ENCODE measurements at regions of chr5 and their contacts with region 1.

Region 1: DNA sequence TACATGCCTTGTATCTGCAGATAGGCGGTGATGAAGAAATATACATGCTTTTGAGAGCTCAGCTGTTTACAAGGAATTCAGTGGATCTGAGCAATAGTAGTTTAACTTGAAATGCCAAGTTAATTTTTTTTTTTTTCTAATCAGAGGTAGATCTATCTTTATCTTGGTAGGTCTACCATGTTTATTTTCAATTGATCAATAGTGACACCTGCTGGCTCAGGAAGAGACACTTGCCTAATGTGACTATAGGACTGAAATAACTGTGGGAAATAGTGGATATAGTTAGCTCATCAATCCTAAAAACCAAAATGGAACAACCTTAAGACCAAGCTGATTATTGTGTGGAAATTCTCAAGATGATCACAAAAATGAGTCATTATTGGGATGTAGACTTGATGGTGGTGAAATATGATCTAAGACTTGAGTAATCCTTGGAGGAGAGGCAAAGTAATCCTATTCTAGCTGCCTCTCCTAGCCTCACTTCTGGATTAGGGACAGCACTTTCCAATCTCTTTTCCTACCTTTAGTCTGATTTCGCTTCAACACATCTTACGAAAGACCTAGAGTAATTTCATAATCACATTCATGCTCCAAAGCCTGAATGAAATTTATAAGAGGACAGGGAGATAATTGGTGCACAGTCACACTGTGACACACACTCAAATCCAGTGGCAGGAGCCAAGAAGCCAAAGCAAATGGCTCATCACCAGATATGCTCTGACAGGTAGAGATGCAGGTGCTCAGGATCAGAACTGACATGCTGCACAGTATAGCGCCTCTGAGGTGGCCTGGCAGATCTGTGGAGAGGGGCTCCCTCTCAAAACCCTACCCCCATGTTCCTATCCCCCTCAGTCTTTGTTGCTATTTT is 156.3 kb downstream of the HMHB1 start:
- DNase-seq: peak; percentile 77
- ATAC-seq: peak; percentile 47
- H3K4me3 ChIP-seq: no peak overlapping the region
- H3K27ac ChIP-seq: peak overlapping the region; percentile 51
- H3K4me1 ChIP-seq: peaks cover 37% of the 10 kb centered on the region
- H3K27me3 ChIP-seq: no peaks in the 10 kb centered on the region
- CTCF ChIP-seq: peak; percentile 74

Region 2: GRCh38 chr5:143355720-143356119 is 612.5 kb before region 1 on chr5:
- CTCF ChIA-PET with region 1: no interaction called
- POLR2A ChIA-PET with region 1: no interaction called
- intact Hi-C with region 1: no loop called
- DNase-seq: peak; percentile 87
- ATAC-seq: peak; percentile 97
- H3K4me3 ChIP-seq: no peak overlapping the region
- H3K27ac ChIP-seq: no peak overlapping the region
- H3K4me1 ChIP-seq: peaks cover 12% of the 10 kb centered on the region
- H3K27me3 ChIP-seq: no peaks in the 10 kb centered on the region
- CTCF ChIP-seq: no peak

Region 3: GRCh38 chr5:143506881-143507551 is 461.2 kb before region 1 on chr5:
- CTCF ChIA-PET with region 1: no interaction called
- POLR2A ChIA-PET with region 1: no interaction called
- intact Hi-C with region 1: loop called (anchors 10 kb)
- DNase-seq: peak; percentile 94
- ATAC-seq: peak; percentile 94
- H3K4me3 ChIP-seq: 0 out of 2 replicates have a peak overlapping the region, but pooled peaks have one; percentile 36
- H3K27ac ChIP-seq: peak overlapping the region; percentile 86
- H3K4me1 ChIP-seq: peaks cover 27% of the 10 kb centered on the region
- H3K27me3 ChIP-seq: no peaks in the 10 kb centered on the region
- CTCF ChIP-seq: peak; percentile 21; the same call in 1 of the 2 replicates

Region 4: GRCh38 chr5:143700994-143701393 is 267.3 kb before region 1 on chr5:
- CTCF ChIA-PET with region 1: no interaction called
- POLR2A ChIA-PET with region 1: no interaction called
- intact Hi-C with region 1: loop called (anchors 5 kb)
- DNase-seq: no peak
- ATAC-seq: no peak
- H3K4me3 ChIP-seq: no peak overlapping the region
- H3K27ac ChIP-seq: no peak overlapping the region
- H3K4me1 ChIP-seq: no peaks in the 10 kb centered on the region
- H3K27me3 ChIP-seq: no peaks in the 10 kb centered on the region
- CTCF ChIP-seq: 0 out of 2 replicates have a peak, but pooled peaks have one; percentile 21

Region 5: DNA sequence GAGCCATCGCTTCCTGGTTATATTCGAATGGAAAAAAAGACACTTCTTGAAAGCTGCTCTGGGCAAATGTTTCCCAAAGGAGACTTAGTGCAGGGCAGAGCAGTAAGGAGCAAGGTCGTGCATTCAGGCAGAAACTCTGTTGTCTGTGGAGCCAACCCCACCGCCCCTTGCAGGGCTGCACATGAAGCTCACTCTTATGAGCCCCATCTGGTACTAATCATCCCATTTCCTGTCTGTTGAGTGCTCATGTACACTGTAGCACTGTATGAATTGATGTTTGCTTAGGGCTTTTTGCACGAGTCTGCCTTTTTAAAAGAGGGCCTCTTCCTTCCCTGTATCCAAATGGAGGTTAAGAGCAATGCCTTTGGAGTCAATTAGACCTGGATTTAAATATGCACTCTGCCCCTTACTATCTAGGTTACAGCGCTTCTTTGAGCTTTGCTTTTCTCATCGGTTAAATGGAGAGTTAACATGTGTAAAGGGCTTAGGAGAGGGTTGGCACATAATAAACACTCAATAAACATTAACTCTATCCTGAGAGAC is 130.9 kb before region 1 on chr5:
- CTCF ChIA-PET with region 1: no interaction called
- POLR2A ChIA-PET with region 1: no interaction called
- intact Hi-C with region 1: no loop called
- DNase-seq: no peak
- ATAC-seq: no peak
- H3K4me3 ChIP-seq: no peak overlapping the region
- H3K27ac ChIP-seq: no peak overlapping the region
- H3K4me1 ChIP-seq: no peaks in the 10 kb centered on the region
- H3K27me3 ChIP-seq: no peaks in the 10 kb centered on the region
- CTCF ChIP-seq: no peak

Region 6: DNA sequence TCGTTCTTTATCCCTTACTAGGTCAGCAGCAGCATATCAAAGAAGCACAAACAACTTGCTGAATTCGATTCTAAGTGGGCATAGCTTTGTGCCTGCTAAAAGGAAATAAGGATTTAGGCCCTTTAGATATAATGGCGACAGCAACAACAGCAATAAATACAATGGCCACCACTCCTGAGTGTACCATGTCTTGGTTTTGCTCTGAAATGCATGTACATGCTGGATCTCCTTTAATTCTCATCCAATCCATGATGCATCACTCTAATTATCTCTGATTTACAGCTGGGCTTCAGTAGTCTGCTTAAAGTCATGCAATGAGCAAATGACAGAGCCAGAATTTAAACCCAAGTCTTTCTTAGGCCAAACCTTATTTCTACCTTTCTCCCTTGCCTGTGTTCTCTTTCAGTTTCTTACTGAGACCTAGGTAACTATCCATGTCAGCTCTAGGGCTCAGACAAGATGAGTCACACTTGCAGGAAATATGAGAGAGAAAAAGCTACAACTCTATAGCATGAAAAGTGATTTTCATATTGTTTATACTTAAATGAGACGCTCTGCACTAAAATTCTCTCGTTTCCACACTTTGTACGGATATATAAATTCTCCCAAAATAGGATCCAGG is 44.5 kb before region 1 on chr5:
- CTCF ChIA-PET with region 1: no interaction called
- POLR2A ChIA-PET with region 1: no interaction called
- intact Hi-C with region 1: loop called (anchors 1 kb)
- DNase-seq: peak; percentile 60
- ATAC-seq: peak; percentile 72
- H3K4me3 ChIP-seq: peak overlapping the region; percentile 43; the same call in 1 of the 2 replicates
- H3K27ac ChIP-seq: peak overlapping the region; percentile 95
- H3K4me1 ChIP-seq: peaks cover 53% of the 10 kb centered on the region
- H3K27me3 ChIP-seq: no peaks in the 10 kb centered on the region
- CTCF ChIP-seq: no peak

Region 7: DNA sequence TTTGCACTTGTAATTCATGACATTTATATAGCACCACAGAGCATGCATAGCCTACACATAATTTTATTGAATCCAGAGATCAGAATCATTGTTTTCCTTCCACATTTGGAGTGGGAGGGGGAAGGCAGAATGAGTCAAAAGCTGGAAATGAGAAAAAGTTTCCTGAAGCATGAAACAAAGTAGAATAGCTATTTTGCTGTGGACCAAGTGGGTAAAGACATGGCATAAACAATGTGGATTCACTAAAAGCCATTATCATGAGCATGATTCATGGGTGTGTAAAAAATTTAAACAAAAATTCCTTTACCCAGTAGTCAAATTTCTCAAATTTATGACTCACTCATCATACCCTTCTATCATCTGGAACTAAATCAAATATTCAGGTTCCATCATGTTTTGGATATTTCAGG is 104.3 kb after region 1 on chr5:
- CTCF ChIA-PET with region 1: no interaction called
- POLR2A ChIA-PET with region 1: no interaction called
- intact Hi-C with region 1: no loop called
- DNase-seq: peak; percentile 84
- ATAC-seq: peak; percentile 92
- H3K4me3 ChIP-seq: no peak overlapping the region
- H3K27ac ChIP-seq: peak overlapping the region; percentile 87
- H3K4me1 ChIP-seq: peaks cover 17% of the 10 kb centered on the region
- H3K27me3 ChIP-seq: no peaks in the 10 kb centered on the region
- CTCF ChIP-seq: no peak

Region 8: GRCh38 chr5:144125163-144125726 is 157.0 kb after region 1 on chr5:
- CTCF ChIA-PET with region 1: no interaction called
- POLR2A ChIA-PET with region 1: no interaction called
- intact Hi-C with region 1: no loop called
- DNase-seq: no peak
- ATAC-seq: no peak
- H3K4me3 ChIP-seq: no peak overlapping the region
- H3K27ac ChIP-seq: no peak overlapping the region
- H3K4me1 ChIP-seq: no peaks in the 10 kb centered on the region
- H3K27me3 ChIP-seq: no peaks in the 10 kb centered on the region
- CTCF ChIP-seq: no peak